Activated naive CD4-positive, alpha-beta T cell treated with anti-CD3 and anti-CD28 coated beads for 36 hours (primary cell): ENCODE measurements at regions of chr9 and their contacts with region 1.

Region 1: GRCh38 chr9:91150998-91151717 is 210.6 kb downstream of the AUH start:
- DNase-seq: peak; percentile 66
- H3K4me3 Mint-ChIP-seq: peak overlapping the region; percentile 15
- H3K27ac Mint-ChIP-seq: peak overlapping the region; percentile 89
- H3K4me1 Mint-ChIP-seq: peaks cover 62% of the 10 kb centered on the region
- H3K27me3 Mint-ChIP-seq: peaks cover 2% of the 10 kb centered on the region

Region 2: DNA sequence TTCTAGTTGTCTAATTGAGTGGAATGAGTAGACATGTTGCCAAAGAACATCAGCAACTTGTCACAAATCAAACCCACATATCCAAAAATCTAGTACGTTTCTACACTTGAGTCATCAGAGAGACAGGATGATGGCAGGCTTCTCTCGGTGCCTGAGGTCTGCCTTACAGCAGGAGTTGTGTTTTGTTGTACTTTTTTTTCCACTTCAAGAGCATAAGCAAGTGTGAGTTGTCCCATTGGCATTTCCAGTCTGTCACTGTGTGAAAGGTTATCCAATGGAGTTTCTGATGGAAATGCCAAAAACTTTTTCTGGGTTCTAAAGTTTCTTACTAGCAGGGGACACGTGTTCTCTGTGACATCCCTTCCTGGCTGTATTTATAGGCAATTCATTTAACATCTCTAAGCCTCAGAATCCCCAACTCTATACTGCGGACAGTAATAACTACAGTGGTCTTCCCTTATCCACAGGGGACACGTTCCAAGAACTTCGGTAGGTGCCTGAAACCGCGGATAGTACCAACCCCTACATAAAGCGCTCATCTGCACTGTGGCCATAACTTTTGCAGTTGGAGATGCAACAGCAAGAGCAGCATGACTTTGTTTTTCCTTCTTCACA is 103.1 kb before region 1 on chr9:
- CTCF ChIA-PET with region 1: interaction called, 7 read pairs
- intact Hi-C with region 1: loop called (anchors 1 kb)
- DNase-seq: peak; percentile 75
- H3K4me3 Mint-ChIP-seq: peak overlapping the region; percentile 20
- H3K27ac Mint-ChIP-seq: peak overlapping the region; percentile 89
- H3K4me1 Mint-ChIP-seq: peaks cover 44% of the 10 kb centered on the region
- H3K27me3 Mint-ChIP-seq: peaks cover 36% of the 10 kb centered on the region

Region 3: DNA sequence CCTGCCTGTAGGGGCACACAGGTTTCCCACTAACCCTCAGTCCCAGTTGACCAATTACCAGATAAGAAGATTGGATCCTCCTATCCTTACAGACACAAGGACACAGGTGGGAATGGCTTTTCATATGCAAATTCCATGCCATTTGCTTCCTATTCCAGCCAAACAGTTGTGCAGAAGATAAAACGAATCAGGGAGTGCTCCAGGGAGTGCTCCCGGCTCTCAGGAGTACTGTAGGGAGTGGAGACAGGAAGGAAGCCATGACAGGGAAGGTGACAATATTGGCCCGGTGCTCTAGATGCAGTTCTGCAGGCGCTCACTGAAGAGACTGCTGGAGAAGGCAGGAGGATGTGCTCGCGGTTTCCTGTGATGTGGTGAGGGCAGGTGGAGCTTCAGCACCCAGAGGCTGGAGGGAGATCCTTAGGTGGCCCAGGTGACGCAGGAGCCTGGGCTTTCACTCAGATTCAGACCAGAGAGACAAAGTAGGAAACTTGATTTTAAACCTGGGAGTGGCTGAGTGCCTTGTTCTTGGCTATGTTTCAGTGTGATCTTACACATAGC is 49.5 kb before region 1 on chr9:
- CTCF ChIA-PET with region 1: interaction called, 9 read pairs
- intact Hi-C with region 1: loop called (anchors 1 kb)
- DNase-seq: peak; percentile 97
- H3K4me3 Mint-ChIP-seq: peak overlapping the region; percentile 59
- H3K27ac Mint-ChIP-seq: peak overlapping the region; percentile 14
- H3K4me1 Mint-ChIP-seq: peaks cover 41% of the 10 kb centered on the region
- H3K27me3 Mint-ChIP-seq: peaks cover 3% of the 10 kb centered on the region

Region 4: GRCh38 chr9:91164724-91165520 is 13.8 kb after region 1 on chr9:
- CTCF ChIA-PET with region 1: interaction called, 3 read pairs
- intact Hi-C with region 1: loop called (anchors 1 kb)
- DNase-seq: peak; percentile 78
- H3K4me3 Mint-ChIP-seq: no peak overlapping the region
- H3K27ac Mint-ChIP-seq: peak overlapping the region; percentile 54
- H3K4me1 Mint-ChIP-seq: peaks cover 37% of the 10 kb centered on the region
- H3K27me3 Mint-ChIP-seq: peaks cover 9% of the 10 kb centered on the region

Region 5: DNA sequence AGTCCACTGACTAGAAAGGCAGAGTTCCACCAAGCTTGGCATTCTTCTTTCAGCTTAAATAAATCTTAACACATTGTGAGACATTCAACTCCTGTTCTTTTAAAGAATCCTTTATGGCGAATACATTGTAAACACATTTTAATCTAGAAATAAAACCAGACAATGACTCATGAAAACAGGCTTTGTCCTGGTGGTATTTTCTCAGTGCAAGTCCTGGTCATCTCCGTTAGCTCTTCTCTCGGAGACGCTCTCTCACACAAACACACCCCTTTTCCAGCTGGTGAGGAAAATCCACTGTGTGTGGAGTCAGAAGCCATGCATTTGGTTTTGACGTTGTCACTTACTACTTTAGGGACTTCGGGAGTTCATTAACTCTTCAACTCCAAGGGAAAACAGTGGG is 70.2 kb after region 1 on chr9:
- CTCF ChIA-PET with region 1: no interaction called
- intact Hi-C with region 1: no loop called
- DNase-seq: no peak
- H3K4me3 Mint-ChIP-seq: no peak overlapping the region
- H3K27ac Mint-ChIP-seq: no peak overlapping the region
- H3K4me1 Mint-ChIP-seq: peaks cover 14% of the 10 kb centered on the region
- H3K27me3 Mint-ChIP-seq: no peaks in the 10 kb centered on the region

Region 6: DNA sequence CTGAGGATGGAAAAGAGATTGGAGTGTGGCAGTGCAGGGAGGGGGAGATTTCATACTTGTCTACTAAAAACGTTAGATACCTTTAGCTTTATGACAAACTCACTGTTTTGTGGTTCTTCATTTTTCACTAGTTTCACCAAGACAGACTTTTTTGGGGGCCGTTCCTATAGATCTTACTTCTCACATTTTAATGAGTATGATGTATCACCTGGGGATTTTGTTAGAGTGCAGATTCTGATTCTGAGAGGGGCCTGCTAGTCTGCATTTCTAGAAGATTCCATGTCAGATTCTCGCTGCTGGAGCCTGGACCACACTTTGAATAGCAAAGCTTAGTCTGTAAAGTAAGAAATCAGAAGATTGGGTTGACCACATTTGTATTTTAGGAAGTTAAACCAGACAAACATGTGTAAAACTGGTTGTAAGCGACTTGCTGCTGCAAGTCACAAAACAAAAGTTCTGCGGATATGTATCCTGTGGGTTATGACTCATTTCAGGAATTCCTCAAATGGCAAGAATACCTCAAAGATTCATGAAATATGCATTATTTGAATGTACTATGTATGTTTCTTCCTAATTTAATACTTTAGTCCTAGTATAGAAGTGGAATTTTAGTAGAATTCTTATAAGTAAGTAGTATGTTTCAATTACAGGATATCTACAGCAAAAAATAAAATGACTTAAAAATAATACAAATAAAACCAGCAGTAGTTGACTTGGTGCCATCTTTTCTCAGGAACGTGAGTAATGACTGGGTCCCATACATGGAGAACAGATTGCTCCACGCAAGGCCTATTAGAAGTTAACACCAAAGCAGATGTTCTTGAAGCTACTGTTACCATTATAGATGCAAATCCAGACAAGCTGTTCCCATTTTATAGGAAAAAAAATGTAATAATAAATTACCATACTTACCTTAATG is 244.7 kb after region 1 on chr9:
- CTCF ChIA-PET with region 1: no interaction called
- intact Hi-C with region 1: loop called (anchors 1 kb)
- DNase-seq: peak; percentile 41
- H3K4me3 Mint-ChIP-seq: no peak overlapping the region
- H3K27ac Mint-ChIP-seq: peak overlapping the region; percentile 74
- H3K4me1 Mint-ChIP-seq: peaks cover 11% of the 10 kb centered on the region
- H3K27me3 Mint-ChIP-seq: peaks cover 12% of the 10 kb centered on the region

Region 7: DNA sequence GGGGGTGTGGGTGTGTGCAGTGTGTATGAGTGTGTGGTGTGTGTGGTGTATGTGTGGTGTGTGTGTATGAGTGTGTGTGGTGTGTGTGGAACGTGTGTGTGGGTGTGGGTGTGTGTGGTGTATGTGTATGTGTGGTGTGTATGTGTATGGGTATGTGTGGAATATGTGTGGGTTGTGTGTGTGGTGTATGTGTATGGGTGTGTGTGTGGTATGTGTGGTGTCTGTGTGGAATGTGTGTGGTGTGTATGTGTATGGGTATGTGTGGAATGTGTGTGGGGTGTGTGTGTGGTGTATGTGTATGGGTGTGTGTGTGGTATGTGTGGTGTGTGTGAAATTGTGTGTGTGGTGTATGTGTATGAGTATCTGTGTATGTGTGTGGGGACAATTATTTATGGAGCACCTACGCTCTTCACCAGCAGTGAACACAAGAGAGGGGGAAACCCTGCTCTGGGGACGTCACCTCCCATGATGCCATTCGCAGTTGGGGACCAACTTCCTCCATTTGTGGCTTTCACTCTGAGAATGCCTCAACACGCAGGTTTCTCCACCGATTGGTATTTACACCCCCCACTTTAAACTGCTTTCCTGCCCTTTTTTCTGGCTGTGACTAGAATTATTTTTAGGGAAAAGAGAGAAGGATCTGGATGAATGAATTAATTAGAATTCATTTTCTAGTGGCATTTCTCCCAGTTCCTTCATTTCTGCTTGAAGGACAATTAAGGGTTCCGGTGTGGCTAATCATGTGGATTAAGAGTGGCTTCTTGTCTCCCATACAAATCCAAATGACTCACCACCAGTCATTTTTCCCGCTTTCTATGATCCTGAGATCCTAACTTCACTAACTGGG is 560.8 kb after region 1 on chr9:
- CTCF ChIA-PET with region 1: no interaction called
- intact Hi-C with region 1: loop called (anchors 1 kb)
- DNase-seq: peak; percentile 92
- H3K4me3 Mint-ChIP-seq: no peak overlapping the region
- H3K27ac Mint-ChIP-seq: no peak overlapping the region
- H3K4me1 Mint-ChIP-seq: no peaks in the 10 kb centered on the region
- H3K27me3 Mint-ChIP-seq: peaks cover 28% of the 10 kb centered on the region